A673 (cell line): ENCODE measurements at regions of chr6 and their contacts with region 1.

Region 1: GRCh38 chr6:31352683-31353383 is 4.1 kb downstream of the HLA-B start:
- DNase-seq: no peak
- H3K4me3 ChIP-seq: no peak overlapping the region
- H3K27ac ChIP-seq: no peak overlapping the region
- H3K4me1 ChIP-seq: peaks cover 6% of the 10 kb centered on the region
- H3K27me3 ChIP-seq: peaks cover 33% of the 10 kb centered on the region
- CTCF ChIP-seq: no peak

Region 2: GRCh38 chr6:31139599-31139998 is 213.2 kb before region 1 on chr6:
- CTCF ChIA-PET with region 1: no interaction called
- POLR2A ChIA-PET with region 1: no interaction called
- intact Hi-C with region 1: no loop called
- DNase-seq: no peak
- H3K4me3 ChIP-seq: no peak overlapping the region
- H3K27ac ChIP-seq: no peak overlapping the region
- H3K4me1 ChIP-seq: no peaks in the 10 kb centered on the region
- H3K27me3 ChIP-seq: no peaks in the 10 kb centered on the region
- CTCF ChIP-seq: no peak

Region 3: GRCh38 chr6:31285486-31285885 is 67.3 kb before region 1 on chr6:
- CTCF ChIA-PET with region 1: no interaction called
- POLR2A ChIA-PET with region 1: interaction called, 13 read pairs
- intact Hi-C with region 1: no loop called
- DNase-seq: no peak
- H3K4me3 ChIP-seq: no peak overlapping the region
- H3K27ac ChIP-seq: no peak overlapping the region
- H3K4me1 ChIP-seq: no peaks in the 10 kb centered on the region
- H3K27me3 ChIP-seq: peaks cover 13% of the 10 kb centered on the region
- CTCF ChIP-seq: no peak